ENCODE measurements at regions of chr6 and their contacts with region 1.

Region 1: GRCh38 chr6:43263314-43264178 is 20.3 kb downstream of the TTBK1 start:
- DNase-seq: no peak
- H3K4me3 ChIP-seq: no peak overlapping the region
- H3K27me3 ChIP-seq: peaks cover 16% of the 10 kb centered on the region
- CTCF ChIP-seq: peak; percentile 88

Region 2: DNA sequence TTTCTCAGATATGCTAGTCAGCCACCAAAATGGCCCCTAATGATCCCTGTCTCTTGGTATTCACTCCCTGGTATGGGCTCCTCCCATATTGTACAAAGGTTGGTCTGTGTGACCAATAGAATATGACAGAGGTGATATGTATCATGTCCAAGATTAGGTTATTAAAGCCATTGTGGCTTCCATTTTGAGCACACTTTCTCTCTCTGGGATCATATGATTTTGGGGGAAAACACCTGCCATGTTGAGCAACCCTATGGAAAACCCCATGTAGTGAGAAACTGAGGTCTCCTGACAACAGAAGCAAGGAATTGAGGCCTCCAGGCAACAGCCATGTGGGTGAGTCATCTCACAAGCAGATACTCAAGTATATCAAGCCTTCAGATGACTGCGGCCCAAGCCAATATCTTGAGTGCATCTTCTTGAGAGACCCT is 113.0 kb after region 1 on chr6:
- CTCF ChIA-PET with region 1: no interaction called
- POLR2A ChIA-PET with region 1: no interaction called
- DNase-seq: no peak
- H3K4me3 ChIP-seq: no peak overlapping the region
- H3K27me3 ChIP-seq: peaks cover 2% of the 10 kb centered on the region; the same call in 1 of the 2 replicates
- CTCF ChIP-seq: no peak

Region 3: DNA sequence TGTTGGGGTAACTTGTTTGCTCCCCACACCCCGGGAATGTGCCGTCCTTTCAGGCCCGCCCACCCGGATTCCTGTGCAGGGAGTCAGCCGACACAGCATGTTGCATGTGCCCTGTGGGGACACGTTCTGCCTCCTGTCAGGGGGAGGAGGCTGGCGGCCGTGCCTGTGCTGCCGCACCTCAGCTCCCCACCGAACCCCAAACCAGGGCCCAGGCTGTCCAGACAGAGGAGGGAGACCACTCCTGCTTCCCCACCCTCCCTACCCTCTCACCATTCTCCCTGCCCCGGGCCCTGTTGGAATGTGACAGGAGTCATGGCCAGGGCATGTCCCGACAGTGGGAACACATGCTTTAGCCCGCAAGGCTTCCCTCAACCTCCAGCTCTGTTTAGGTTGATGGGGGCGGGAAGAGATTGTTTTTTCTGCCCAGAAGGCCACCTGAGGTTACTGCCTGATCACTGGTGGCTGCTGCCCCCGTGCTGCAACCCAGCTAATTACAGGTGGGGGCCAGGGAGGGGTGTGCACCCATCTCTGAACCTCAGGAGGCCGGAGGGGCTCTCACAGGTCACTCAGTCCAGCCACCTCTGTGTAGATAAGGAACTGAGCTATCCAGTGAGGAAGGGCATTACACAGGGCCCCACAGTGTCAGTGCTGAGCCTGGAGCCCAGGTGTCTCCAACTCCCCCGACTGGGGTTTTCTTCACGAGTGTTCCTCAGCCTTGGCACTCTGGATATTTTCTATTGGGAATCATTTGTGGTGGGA is 233.0 kb after region 1 on chr6:
- CTCF ChIA-PET with region 1: interaction called, 16 read pairs
- POLR2A ChIA-PET with region 1: no interaction called
- DNase-seq: no peak
- H3K4me3 ChIP-seq: no peak overlapping the region
- H3K27me3 ChIP-seq: no peaks in the 10 kb centered on the region
- CTCF ChIP-seq: peak; percentile 76

Measured in BJ (cell line).